Activated naive CD4-positive, alpha-beta T cell treated with anti-CD3 and anti-CD28 coated beads for 36 hours (primary cell): ENCODE measurements at regions of chr2 and their contacts with region 1.

Region 1: DNA sequence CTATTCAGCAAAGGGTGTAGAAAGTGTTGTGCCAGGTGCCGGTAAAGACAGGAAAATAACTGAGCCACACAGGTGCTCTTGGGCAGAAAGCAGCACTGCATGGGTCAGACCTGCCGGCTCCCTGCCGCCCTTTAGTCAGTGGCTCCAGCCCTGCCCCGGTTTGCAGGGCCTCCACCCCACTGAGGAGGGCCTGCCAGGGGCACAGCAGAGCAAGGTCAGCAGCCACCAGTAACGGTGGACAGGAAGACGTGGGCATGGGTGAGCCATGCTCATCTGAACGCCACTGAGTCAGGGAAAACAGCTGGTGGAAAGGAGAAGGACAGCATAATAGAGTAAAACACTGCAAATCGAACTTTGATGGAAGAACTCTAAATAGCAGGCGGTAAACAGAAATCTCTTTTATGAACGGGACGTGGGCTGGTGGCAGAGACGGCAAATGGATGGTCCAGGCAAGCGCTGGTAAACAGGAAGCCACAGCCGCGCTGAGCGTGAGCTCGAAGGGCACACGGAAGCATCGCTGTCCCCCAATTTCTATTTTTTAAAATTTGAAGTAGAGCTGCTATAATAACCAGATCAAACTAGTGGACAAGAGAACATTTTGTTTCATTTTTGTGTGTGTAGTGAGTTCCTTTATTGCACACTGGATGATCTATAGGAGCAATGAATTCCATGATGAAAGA is 141.8 kb upstream of the ALKAL2 start:
- DNase-seq: peak; percentile 26
- H3K4me3 Mint-ChIP-seq: peak overlapping the region; percentile 52
- H3K27ac Mint-ChIP-seq: no peak overlapping the region
- H3K4me1 Mint-ChIP-seq: peaks cover 20% of the 10 kb centered on the region
- H3K27me3 Mint-ChIP-seq: no peaks in the 10 kb centered on the region

Region 2: GRCh38 chr2:393711-394696 is 35.7 kb before region 1 on chr2:
- CTCF ChIA-PET with region 1: no interaction called
- intact Hi-C with region 1: loop called (anchors 2 kb)
- DNase-seq: peak; percentile 85
- H3K4me3 Mint-ChIP-seq: peak overlapping the region; percentile 76
- H3K27ac Mint-ChIP-seq: peak overlapping the region; percentile 68
- H3K4me1 Mint-ChIP-seq: peaks cover 17% of the 10 kb centered on the region
- H3K27me3 Mint-ChIP-seq: peaks cover 9% of the 10 kb centered on the region